PC-9 (cell line): ENCODE measurements at regions of chr20 and their contacts with region 1.

Region 1: GRCh38 chr20:57748601-57749130 is 38.9 kb upstream of the PMEPA1 start:
- DNase-seq: peak; percentile 90 to 94
- H3K4me3 ChIP-seq: peak overlapping the region; percentile 55
- H3K27ac ChIP-seq: no peak overlapping the region
- H3K4me1 ChIP-seq: peaks cover 20% of the 10 kb centered on the region
- H3K27me3 ChIP-seq: no peaks in the 10 kb centered on the region
- CTCF ChIP-seq: no peak

Region 2: DNA sequence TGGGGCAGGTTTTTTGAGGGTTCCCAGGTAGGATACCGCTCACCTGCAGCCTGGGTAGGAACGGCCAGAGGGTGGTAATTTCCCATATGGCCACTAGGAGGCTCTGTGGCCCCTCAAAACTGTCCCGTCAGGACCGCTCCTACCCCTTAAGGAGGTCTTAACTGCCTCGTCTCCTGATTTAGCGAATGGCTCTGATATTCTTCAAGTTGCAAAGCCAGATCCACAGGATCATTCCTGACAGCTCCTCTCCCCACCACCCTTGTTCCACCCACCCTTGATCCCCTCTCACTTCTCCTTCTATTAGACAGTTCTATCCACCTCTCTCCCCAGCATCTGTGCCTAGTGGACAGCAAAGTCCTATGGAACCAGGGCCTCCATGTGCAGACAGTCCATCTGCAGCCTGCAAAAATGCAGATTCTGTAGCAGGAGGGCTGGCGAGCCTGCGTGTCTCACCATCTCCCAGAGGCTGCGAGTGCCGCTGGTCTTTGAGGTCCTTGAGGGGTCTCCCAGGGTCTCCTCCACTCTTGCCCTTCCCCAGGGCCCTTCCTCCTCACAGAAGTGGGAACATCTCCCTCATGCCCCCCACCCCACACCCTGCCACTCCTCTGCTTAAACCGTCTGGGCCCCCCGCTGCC is 94.2 kb before region 1 on chr20:
- CTCF ChIA-PET with region 1: no interaction called
- POLR2A ChIA-PET with region 1: no interaction called
- intact Hi-C with region 1: loop called (anchors 1 kb)
- DNase-seq: peak in 1 of 2 experiments; percentile 67
- H3K4me3 ChIP-seq: no peak overlapping the region
- H3K27ac ChIP-seq: no peak overlapping the region
- H3K4me1 ChIP-seq: no peaks in the 10 kb centered on the region
- H3K27me3 ChIP-seq: no peaks in the 10 kb centered on the region
- CTCF ChIP-seq: peak; percentile 98

Region 3: GRCh38 chr20:57718490-57719271 is 30.0 kb before region 1 on chr20:
- CTCF ChIA-PET with region 1: no interaction called
- POLR2A ChIA-PET with region 1: no interaction called
- intact Hi-C with region 1: loop called (anchors 2 kb)
- DNase-seq: peak; percentile 97 to 98
- H3K4me3 ChIP-seq: peak overlapping the region; percentile 60
- H3K27ac ChIP-seq: peak overlapping the region; percentile 76
- H3K4me1 ChIP-seq: peaks cover 41% of the 10 kb centered on the region
- H3K27me3 ChIP-seq: no peaks in the 10 kb centered on the region
- CTCF ChIP-seq: no peak

Region 4: GRCh38 chr20:57930351-57930750 is 181.7 kb after region 1 on chr20:
- CTCF ChIA-PET with region 1: no interaction called
- POLR2A ChIA-PET with region 1: no interaction called
- intact Hi-C with region 1: no loop called
- DNase-seq: no peak
- H3K4me3 ChIP-seq: no peak overlapping the region
- H3K27ac ChIP-seq: no peak overlapping the region
- H3K4me1 ChIP-seq: peaks cover 7% of the 10 kb centered on the region
- H3K27me3 ChIP-seq: no peaks in the 10 kb centered on the region
- CTCF ChIP-seq: no peak